Activated B cell treated with CpG ODN at 0.5 μM for 24 hours (primary cell): ENCODE measurements at regions of chr12 and their contacts with region 1.

Region 1: DNA sequence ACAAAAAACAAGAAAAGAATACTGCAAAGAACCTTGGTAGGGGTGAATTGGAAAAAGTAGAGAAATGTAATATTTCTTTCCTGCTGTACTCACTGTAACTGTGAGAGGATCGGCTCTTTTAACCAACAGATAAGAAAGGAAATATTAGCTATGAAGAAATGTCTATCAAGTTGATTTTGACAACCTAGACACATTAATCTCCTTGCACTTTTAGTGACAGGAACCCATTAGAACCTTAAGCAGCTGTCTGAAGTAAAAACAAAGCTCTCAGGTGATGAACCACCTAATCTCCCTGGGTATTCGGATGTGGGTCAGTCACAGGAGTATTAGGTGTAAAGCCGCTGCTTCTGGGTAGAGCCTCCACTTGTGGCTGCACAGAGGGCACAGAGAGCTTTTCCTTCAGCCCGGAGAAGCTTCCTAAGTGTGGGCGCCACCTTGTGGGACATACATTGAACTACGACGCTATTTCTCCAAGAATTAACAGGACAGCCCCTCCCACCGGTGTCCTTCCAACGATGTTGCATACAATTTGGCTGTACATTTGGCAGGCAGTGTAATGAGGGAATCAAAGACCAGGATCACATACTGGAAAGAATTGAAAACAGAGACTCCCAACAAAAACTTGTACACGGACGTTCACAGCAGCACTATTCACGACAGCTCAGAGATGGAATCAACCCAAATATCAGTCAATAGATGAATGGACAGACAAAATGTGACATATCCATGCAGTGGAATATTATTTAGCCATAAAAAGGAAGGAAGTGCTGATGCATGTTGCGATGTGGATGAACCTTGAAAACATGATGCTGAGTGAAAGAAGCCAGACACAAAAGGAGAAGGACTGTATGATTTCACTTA is 28.9 kb upstream of the MAPKAPK5 start:
- DNase-seq: peak; percentile 43
- ATAC-seq: peak; percentile 99
- H3K4me3 Mint-ChIP-seq: no peak overlapping the region
- H3K27ac Mint-ChIP-seq: no peak overlapping the region
- H3K4me1 Mint-ChIP-seq: peaks cover 5% of the 10 kb centered on the region
- H3K27me3 Mint-ChIP-seq: no peaks in the 10 kb centered on the region
- CTCF ChIP-seq: peak; percentile 77

Region 2: DNA sequence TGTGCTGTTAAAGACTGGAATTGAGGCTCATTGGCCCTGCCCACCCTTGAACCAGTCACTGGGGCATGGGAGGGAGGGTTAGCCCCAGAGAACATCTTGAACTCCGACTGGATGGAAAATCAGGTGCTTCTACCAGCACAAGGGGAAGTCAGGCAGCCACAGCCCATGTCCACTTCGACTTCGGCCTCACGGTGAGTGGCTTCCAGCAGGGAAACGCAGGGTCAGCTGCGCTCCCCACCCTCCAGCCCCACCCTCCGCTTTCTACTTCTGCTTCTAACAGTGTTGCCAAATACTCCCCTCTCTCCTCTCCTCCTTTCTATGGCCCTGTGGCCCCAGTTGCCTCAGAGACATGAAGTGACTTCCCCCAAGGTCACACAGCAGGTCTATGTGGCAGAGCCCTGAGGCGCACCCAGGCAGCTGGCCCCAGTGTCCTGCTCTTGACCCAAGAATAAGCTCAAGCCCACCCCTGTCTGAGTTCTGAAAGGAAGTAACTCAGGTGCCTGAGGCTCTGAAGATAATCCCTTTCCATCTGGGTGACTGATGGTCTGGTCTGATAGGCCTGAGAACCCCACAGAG is 419.3 kb before region 1 on chr12:
- CTCF ChIA-PET with region 1: no interaction called
- POLR2A ChIA-PET with region 1: no interaction called
- intact Hi-C with region 1: no loop called
- DNase-seq: no peak
- ATAC-seq: no peak
- H3K4me3 Mint-ChIP-seq: no peak overlapping the region
- H3K27ac Mint-ChIP-seq: no peak overlapping the region
- H3K4me1 Mint-ChIP-seq: peaks cover 27% of the 10 kb centered on the region
- H3K27me3 Mint-ChIP-seq: no peaks in the 10 kb centered on the region
- CTCF ChIP-seq: no peak

Region 3: GRCh38 chr12:111766608-111767361 is 46.3 kb before region 1 on chr12 and contains the start of gene ALDH2:
- CTCF ChIA-PET with region 1: interaction called, 41 read pairs
- POLR2A ChIA-PET with region 1: interaction called, 8 read pairs
- intact Hi-C with region 1: no loop called
- DNase-seq: peak; percentile 60
- ATAC-seq: peak; percentile 68
- H3K4me3 Mint-ChIP-seq: peak within 1 kb of the TSS; percentile 87
- H3K27ac Mint-ChIP-seq: peak within 1 kb of the TSS; percentile 88
- H3K4me1 Mint-ChIP-seq: peaks cover 55% of the 10 kb centered on the region
- H3K27me3 Mint-ChIP-seq: no peaks in the 10 kb centered on the region
- CTCF ChIP-seq: no peak
- total RNA-seq, gene ALDH2: 36.0 and 37.4 TPM in 2 replicates

Region 4: DNA sequence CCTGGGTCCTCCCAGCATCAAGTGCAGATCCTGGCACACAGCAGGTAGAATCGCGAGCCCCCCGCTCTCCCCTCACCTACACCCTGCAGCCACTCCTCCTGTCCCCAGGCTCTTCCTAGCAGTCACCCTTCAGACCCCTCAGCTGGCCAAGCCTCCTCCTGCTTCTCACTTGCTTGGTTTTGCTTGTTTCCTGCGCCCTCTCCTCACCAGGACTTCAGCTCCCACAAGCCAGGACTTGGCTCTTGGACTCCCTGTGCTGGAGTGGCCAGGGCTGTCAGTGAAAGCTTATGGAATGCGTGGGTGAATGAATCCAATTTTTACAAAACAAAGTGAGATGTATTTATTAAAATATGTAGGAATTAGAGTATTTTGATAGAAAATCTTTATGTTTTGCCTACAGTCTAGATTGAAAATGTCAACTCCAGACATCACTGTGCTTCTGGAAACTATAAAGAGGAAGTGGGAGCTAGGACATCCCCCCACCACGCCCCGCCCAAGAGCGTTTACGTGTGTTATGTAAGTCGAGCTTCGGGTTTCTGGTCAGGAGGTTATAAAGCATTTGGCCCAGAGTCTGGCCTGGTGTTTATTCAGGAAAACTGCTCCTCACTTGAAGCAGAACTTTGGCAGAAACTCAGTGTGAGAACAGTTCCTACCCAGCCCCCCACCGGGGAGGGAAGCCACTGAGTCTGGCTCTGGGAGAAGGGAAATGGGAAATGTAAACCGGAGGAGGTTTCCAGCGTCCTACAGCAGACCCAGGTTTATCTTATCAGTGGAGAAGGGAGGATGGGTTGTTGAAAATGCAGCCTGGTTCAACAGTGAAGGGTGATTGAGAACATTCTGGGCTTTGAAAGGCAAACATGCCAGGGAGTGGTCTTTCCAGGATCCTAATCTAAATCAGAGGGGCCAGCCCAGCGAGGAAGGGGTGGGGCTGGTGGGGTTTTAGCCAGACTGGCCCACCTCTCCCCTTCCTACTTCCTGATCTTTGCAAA is 37.6 kb before region 1 on chr12:
- CTCF ChIA-PET with region 1: interaction called, 10 read pairs
- POLR2A ChIA-PET with region 1: interaction called, 4 read pairs
- intact Hi-C with region 1: loop called (anchors 1 kb)
- DNase-seq: peak; percentile 75
- ATAC-seq: peak; percentile 96
- H3K4me3 Mint-ChIP-seq: peak overlapping the region; percentile 82
- H3K27ac Mint-ChIP-seq: peak overlapping the region; percentile 99
- H3K4me1 Mint-ChIP-seq: peaks cover 40% of the 10 kb centered on the region
- H3K27me3 Mint-ChIP-seq: no peaks in the 10 kb centered on the region
- CTCF ChIP-seq: no peak

Region 5: DNA sequence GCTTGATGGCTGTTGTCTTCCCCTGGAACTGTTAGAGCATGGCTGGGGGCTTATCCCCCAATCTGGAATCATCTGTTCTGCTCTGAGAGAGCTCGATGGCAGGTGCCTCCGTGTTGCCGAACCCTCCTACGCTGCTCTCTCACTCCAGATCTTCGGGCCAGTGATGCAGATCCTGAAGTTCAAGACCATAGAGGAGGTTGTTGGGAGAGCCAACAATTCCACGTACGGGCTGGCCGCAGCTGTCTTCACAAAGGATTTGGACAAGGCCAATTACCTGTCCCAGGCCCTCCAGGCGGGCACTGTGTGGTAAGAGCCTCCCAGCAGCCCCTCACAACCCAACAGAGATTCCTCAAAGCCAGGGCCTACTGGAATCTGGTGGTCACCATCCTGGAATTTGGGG is 13.4 kb before region 1 on chr12:
- CTCF ChIA-PET with region 1: interaction called, 10 read pairs
- POLR2A ChIA-PET with region 1: no interaction called
- intact Hi-C with region 1: no loop called
- DNase-seq: no peak
- ATAC-seq: no peak
- H3K4me3 Mint-ChIP-seq: no peak overlapping the region
- H3K27ac Mint-ChIP-seq: no peak overlapping the region
- H3K4me1 Mint-ChIP-seq: no peaks in the 10 kb centered on the region
- H3K27me3 Mint-ChIP-seq: no peaks in the 10 kb centered on the region
- CTCF ChIP-seq: no peak